ENCODE measurements at regions of chr1 and their contacts with region 1.

Region 1: DNA sequence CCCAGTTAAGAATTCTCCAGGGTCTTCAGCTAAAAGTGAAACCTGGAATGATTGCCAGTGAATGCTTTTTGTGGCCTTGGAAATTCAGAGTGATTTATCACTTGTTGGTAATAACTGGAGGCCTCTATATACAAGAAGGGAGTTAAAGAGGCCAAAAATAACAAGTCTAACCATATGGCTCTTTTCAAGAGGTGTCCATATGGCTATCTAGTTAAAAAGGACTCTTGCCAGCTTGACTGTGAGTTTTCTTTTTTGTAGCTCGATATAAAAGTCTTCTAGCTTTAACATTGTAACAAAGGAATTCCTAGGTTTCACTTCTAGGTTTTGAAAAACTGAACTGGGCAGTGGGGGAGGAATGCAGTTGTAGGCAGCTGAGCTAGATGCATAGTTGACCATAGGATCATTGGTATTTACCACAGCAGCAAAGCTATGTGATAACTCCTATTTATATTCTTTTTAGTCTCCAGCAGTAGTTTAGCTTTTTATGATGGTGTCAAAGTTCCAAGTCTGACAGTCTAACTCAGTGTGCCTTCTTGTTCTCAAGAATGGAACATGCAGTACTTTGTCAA is 44.4 kb downstream of the CACHD1 start:
- DNase-seq: no peak
- ATAC-seq: peak in 7 of 8 donors; percentile 6 to 59 (median 34)
- H3K4me3 ChIP-seq: peak overlapping the region in 5 of 10 donors; percentile 3 to 12 (median 8)
- H3K27ac ChIP-seq: peak overlapping the region; percentile 29 to 77 (median 62)
- H3K4me1 ChIP-seq: peaks cover 0 to 81% (median 63%) of the 10 kb centered on the region in 9 donors
- H3K27me3 ChIP-seq: no peaks in the 10 kb centered on the region
- CTCF ChIP-seq: no peak

Region 2: DNA sequence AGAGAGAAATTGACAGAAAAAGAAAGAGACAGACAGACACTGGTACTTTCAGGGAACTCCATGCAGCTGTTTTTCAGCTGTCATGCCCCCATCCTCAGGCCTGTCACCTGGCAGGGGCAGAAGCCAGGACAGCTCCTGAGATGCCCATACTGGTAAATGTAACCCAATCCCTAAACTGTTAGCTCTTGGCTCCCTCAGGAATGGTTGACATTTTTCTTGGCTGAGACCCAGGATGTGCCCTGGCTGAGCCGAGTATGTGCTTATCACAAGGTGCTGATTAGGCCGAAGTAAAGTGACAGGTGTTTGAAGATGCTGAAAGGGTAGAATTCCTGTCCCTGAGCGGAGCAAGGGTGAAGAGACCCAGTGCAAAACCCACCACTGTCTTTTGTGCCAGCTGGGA is 870.4 kb before region 1 on chr1:
- intact Hi-C with region 1: no loop called
- DNase-seq: peak; percentile 23 to 55
- ATAC-seq: peak; percentile 34 to 92 (median 82)
- H3K4me3 ChIP-seq: no peak overlapping the region
- H3K27ac ChIP-seq: peak overlapping the region in 9 of 10 donors; percentile 27 to 76 (median 63)
- H3K4me1 ChIP-seq: peaks cover 0 to 37% (median 30%) of the 10 kb centered on the region in 9 donors
- H3K27me3 ChIP-seq: no peaks in the 10 kb centered on the region
- CTCF ChIP-seq: no peak

Region 3: GRCh38 chr1:64476251-64476952 is 37.9 kb before region 1 on chr1:
- intact Hi-C with region 1: loop called in 3 of 10 experiments (anchors 5 kb)
- DNase-seq: peak in 1 of 2 donors; percentile 56
- ATAC-seq: peak; percentile 85 to 93 (median 89)
- H3K4me3 ChIP-seq: no peak overlapping the region
- H3K27ac ChIP-seq: peak overlapping the region in 6 of 10 donors; percentile 1 to 53 (median 40)
- H3K4me1 ChIP-seq: peaks cover 5 to 83% (median 43%) of the 10 kb centered on the region in 9 donors
- H3K27me3 ChIP-seq: peaks cover 0 to 16% (median 0%) of the 10 kb centered on the region in 7 donors
- CTCF ChIP-seq: no peak

Region 4: GRCh38 chr1:64553281-64553680 is 39.0 kb after region 1 on chr1:
- intact Hi-C with region 1: loop called in 1 of 10 experiments (anchors 5 kb)
- DNase-seq: no peak
- ATAC-seq: no peak
- H3K4me3 ChIP-seq: no peak overlapping the region
- H3K27ac ChIP-seq: no peak overlapping the region
- H3K4me1 ChIP-seq: peaks cover 0 to 24% (median 6%) of the 10 kb centered on the region in 9 donors
- H3K27me3 ChIP-seq: no peaks in the 10 kb centered on the region
- CTCF ChIP-seq: peak in 4 of 9 donors; percentile 28 to 38 (median 30)

Measured in heart right ventricle (tissue), 16 donors.